ENCODE measurements at regions of chr1 and their contacts with region 1.

Region 1: GRCh38 chr1:243850452-243851256 is 611 bp upstream of the AKT3 start:
- DNase-seq: peak; percentile 74
- H3K4me3 Mint-ChIP-seq: peak overlapping the region; percentile 87
- H3K27ac Mint-ChIP-seq: peak overlapping the region; percentile 84
- H3K4me1 Mint-ChIP-seq: peaks cover 20% of the 10 kb centered on the region
- H3K27me3 Mint-ChIP-seq: peaks cover 37% of the 10 kb centered on the region

Region 2: DNA sequence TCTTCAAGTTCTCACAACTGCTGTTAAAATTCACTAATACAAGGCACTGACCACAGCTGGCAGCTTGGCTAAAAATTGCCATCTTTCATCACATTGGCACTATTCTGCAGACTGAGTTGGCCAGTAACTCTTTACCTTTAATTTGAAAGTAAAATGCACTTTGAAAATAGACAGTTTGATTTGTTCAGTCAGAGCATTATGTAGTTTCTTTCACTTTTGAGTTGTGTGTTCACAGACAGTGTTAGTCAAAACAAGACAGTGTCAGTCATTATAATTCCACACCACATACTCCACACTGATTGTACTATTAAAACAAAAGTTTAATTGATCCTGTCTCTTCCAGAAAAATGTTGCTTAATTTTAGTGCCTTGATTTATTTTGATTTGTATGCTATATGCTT is 434.2 kb before region 1 on chr1:
- intact Hi-C with region 1: loop called (anchors 2 kb)
- DNase-seq: no peak
- H3K4me3 Mint-ChIP-seq: peak overlapping the region; percentile 39
- H3K27ac Mint-ChIP-seq: peak overlapping the region; percentile 64
- H3K4me1 Mint-ChIP-seq: peaks cover 66% of the 10 kb centered on the region
- H3K27me3 Mint-ChIP-seq: no peaks in the 10 kb centered on the region

Region 3: GRCh38 chr1:243799908-243800307 is 50.7 kb before region 1 on chr1:
- intact Hi-C with region 1: loop called (anchors 5 kb)
- DNase-seq: no peak
- H3K4me3 Mint-ChIP-seq: no peak overlapping the region
- H3K27ac Mint-ChIP-seq: no peak overlapping the region
- H3K4me1 Mint-ChIP-seq: peaks cover 16% of the 10 kb centered on the region
- H3K27me3 Mint-ChIP-seq: no peaks in the 10 kb centered on the region

Region 4: DNA sequence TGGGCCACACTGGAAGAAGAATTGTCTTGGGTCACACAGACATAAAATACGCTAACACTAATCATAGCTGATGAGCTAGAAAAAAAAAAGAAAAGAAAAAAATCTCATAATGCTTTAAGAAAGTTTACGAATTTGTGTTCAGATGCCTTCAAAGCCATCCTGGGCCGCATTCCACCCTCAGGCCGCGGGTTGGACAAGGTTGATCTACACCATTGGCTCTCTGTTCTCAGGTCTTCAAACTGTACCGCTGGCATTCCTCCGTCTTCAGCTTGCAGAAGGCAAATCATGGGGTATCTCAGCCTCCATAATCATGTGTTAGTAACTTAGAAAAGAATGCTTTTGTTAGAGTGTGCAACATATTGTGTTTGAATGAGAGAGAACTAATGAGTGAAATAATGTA is 14.3 kb after region 1 on chr1:
- intact Hi-C with region 1: no loop called
- DNase-seq: no peak
- H3K4me3 Mint-ChIP-seq: no peak overlapping the region
- H3K27ac Mint-ChIP-seq: no peak overlapping the region
- H3K4me1 Mint-ChIP-seq: no peaks in the 10 kb centered on the region
- H3K27me3 Mint-ChIP-seq: peaks cover 9% of the 10 kb centered on the region

Region 5: DNA sequence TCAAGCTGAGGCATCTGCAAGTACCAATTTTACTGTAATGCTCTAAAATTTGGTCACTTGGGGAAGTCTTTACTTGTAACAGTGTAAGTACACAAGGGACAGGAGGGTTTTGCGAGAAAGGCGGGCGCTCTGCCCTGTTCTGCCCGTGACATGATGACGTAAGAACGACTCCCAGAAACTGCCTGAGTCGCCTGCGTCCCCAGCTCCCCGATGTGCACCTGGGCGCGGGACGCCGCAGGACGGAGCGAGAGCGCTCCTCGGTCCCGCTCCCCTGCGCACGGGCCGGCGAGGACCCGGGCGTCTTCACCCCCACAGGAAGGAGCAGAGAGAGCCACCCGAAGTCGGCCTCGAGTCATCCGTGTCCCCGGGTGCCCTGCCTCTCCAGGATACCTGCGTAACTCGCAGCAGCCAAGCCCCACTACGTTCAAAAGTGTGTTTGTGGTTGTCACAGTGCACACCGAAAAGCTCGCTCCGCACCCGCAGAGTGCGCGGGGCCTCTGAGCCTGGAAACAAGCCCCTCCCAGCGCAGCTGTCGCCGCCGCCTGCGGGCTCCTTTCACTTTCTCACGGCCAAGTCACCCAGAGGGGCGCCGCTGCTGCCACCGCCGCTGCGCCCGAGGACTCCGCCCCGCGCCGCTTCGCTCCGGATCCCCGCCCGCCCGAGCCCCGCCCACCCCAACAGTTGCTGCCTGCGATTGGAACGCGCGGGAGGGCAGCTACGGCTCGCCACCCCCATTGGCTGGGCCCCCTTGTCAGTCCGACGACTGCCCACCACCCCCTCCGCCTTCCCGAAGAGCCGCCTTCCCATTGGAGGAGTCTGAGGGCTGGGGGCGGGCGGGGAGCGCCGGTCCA is 197.2 kb after region 1 on chr1:
- intact Hi-C with region 1: loop called (anchors 1 kb)
- DNase-seq: peak; percentile 93
- H3K4me3 Mint-ChIP-seq: peak overlapping the region; percentile 92
- H3K27ac Mint-ChIP-seq: peak overlapping the region; percentile 91
- H3K4me1 Mint-ChIP-seq: peaks cover 36% of the 10 kb centered on the region
- H3K27me3 Mint-ChIP-seq: peaks cover 30% of the 10 kb centered on the region

Region 6: GRCh38 chr1:244435562-244436205 is 585.0 kb after region 1 on chr1:
- intact Hi-C with region 1: loop called (anchors 5 kb)
- DNase-seq: no peak
- H3K4me3 Mint-ChIP-seq: peak overlapping the region; percentile 76
- H3K27ac Mint-ChIP-seq: peak overlapping the region; percentile 97
- H3K4me1 Mint-ChIP-seq: peaks cover 38% of the 10 kb centered on the region
- H3K27me3 Mint-ChIP-seq: no peaks in the 10 kb centered on the region

Region 7: GRCh38 chr1:244864253-244865027 is 1013.8 kb after region 1 on chr1 and contains the start of gene HNRNPU:
- intact Hi-C with region 1: loop called (anchors 10 kb)
- DNase-seq: peak; percentile 97
- H3K4me3 Mint-ChIP-seq: peak within 1 kb of the TSS; percentile 87
- H3K27ac Mint-ChIP-seq: peak within 1 kb of the TSS; percentile 95
- H3K4me1 Mint-ChIP-seq: peaks cover 41% of the 10 kb centered on the region
- H3K27me3 Mint-ChIP-seq: no peaks in the 10 kb centered on the region
- total RNA-seq, gene HNRNPU: 566 and 573 TPM in 2 replicates